GM12878 (cell line): ENCODE measurements at regions of chr10 and their contacts with region 1.

Region 1: DNA sequence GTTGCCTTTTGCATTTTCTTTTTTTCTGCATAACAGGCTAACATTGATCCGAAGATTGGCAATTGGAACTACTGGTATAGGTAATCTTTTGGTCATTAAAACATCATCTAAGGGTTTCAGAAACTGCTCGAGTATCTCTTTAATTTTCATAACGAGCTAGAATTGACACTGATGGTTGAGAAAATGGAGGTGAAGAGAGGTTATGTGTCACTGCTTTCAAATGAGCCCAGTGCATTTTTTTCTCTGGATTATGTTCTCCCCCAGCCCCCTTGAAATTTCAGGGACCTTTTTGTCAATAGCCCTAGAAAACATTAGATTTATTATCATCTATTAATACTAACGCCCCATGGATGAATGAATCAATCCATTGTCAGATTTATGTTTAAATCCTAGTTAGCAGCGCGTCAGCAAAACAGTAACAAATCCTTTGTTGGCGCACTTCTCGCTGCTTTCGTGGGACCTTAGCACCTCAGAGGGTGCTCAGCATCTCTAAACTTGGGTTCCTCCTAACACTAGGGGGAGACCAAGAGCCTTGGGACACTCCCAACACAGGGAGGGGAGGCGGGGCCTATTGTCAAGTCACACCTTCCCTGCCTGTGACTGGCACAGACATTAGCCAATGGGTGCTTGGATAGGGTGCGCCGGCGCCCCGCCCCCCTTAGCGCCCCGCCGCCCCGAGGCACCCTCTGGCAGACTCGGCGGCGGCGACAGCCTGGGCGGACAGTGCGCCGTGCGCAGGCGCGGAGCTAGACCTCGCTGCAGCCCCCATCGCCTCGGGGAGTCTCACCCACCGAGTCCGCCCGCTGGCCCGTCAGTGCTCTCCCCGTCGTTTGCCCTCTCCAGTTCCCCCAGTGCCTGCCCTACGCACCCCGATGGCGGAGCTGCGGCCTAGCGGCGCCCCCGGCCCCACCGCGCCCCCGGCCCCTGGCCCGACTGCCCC is at the start of gene SUFU:
- DNase-seq: peak; percentile 93
- ATAC-seq: peak; percentile 82
- H3K4me3 ChIP-seq: peak within 1 kb of the TSS; percentile 88
- H3K27ac ChIP-seq: peak within 1 kb of the TSS; percentile 72; the same call in 1 of the 2 replicates
- H3K4me1 ChIP-seq: peaks cover 7% of the 10 kb centered on the region
- H3K27me3 ChIP-seq: no peaks in the 10 kb centered on the region
- CTCF ChIP-seq: peak; percentile 82 to 98 (median 89); a peak in 5 of 6 replicates
- EP300 ChIP-seq: no peak
- POLR2A ChIP-seq: peak; percentile 92
- RAD21 ChIP-seq: peak; percentile 88
- polyA plus RNA-seq, gene SUFU: 0.68 to 0.84 TPM

Region 2: GRCh38 chr10:102159051-102159597 is 344.4 kb before region 1 on chr10:
- CTCF ChIA-PET with region 1: no interaction called
- POLR2A ChIA-PET with region 1: no interaction called
- RAD21 ChIA-PET with region 1: no interaction called
- SMC1A ChIA-PET with region 1: no interaction called
- in situ Hi-C with region 1: no loop called
- intact Hi-C with region 1: no loop called
- DNase-seq: no peak
- ATAC-seq: no peak
- H3K4me3 ChIP-seq: no peak overlapping the region
- H3K27ac ChIP-seq: no peak overlapping the region
- H3K4me1 ChIP-seq: no peaks in the 10 kb centered on the region; the same call in 1 of the 2 replicates
- H3K27me3 ChIP-seq: no peaks in the 10 kb centered on the region
- CTCF ChIP-seq: no peak
- EP300 ChIP-seq: no peak
- POLR2A ChIP-seq: no peak
- RAD21 ChIP-seq: no peak

Region 3: GRCh38 chr10:102410429-102411073 is 93.0 kb before region 1 on chr10:
- CTCF ChIA-PET with region 1: no interaction called
- POLR2A ChIA-PET with region 1: no interaction called
- RAD21 ChIA-PET with region 1: no interaction called
- SMC1A ChIA-PET with region 1: no interaction called
- in situ Hi-C with region 1: no loop called
- intact Hi-C with region 1: no loop called
- DNase-seq: no peak
- ATAC-seq: no peak
- H3K4me3 ChIP-seq: no peak overlapping the region; the same call in 1 of the 2 replicates
- H3K27ac ChIP-seq: no peak overlapping the region
- H3K4me1 ChIP-seq: peaks cover 9% of the 10 kb centered on the region
- H3K27me3 ChIP-seq: peaks cover 17 to 21% of the 10 kb centered on the region in 2 experiments
- CTCF ChIP-seq: no peak
- EP300 ChIP-seq: no peak
- POLR2A ChIP-seq: no peak; the same call in 1 of the 2 replicates
- RAD21 ChIP-seq: no peak

Region 4: DNA sequence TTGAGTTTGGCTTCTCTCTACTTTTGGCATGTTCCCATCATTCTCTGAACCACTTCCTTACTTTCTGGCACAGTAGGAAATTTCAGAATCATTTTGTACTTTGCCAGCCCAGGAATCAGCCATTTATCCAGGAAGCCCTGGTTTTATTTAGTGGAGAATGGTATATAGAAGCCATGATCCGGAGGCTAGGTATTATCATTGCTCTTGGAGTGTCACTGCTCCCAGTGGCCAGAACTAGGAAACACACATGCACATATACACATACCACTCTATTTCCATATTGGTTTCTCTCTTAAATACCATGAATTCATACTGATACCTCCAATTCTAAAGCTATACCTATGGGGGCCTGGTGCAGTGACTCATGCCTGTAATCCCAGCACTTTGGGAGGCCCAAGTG is 36.5 kb after region 1 on chr10:
- CTCF ChIA-PET with region 1: interaction called, 6 read pairs
- POLR2A ChIA-PET with region 1: interaction called, 5 read pairs
- RAD21 ChIA-PET with region 1: interaction called, 5 read pairs
- SMC1A ChIA-PET with region 1: interaction called, 9 read pairs
- in situ Hi-C with region 1: no loop called
- intact Hi-C with region 1: loop called (anchors 1 kb)
- DNase-seq: no peak
- ATAC-seq: peak; percentile 88
- H3K4me3 ChIP-seq: no peak overlapping the region; the same call in 1 of the 2 replicates
- H3K27ac ChIP-seq: no peak overlapping the region
- H3K4me1 ChIP-seq: peaks cover 20% of the 10 kb centered on the region
- H3K27me3 ChIP-seq: no peaks in the 10 kb centered on the region
- CTCF ChIP-seq: peak; percentile 40 to 55 (median 53)
- EP300 ChIP-seq: no peak
- POLR2A ChIP-seq: no peak
- RAD21 ChIP-seq: peak; percentile 34

Region 5: DNA sequence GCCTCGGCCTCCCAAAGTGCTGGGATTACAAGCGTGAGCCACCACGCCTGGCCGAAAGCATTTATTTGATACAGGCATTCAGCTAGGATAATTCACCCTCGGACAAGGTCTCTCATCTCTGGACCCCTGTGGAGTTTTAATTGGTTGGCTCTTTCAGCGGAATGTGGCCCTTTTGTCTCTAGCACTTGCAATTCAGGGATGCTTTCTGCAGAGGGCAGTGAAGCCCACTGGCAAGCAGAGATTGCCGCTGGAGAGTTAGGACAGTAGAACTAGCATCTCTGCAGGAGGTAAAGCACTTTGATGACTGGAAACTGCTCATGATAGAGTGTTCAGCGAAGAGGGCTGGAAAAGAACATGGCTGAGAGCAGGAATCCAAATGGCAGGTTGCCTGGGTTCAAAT is 62.2 kb after region 1 on chr10:
- CTCF ChIA-PET with region 1: interaction called, 11 read pairs
- POLR2A ChIA-PET with region 1: interaction called, 5 read pairs
- RAD21 ChIA-PET with region 1: interaction called, 12 read pairs
- SMC1A ChIA-PET with region 1: interaction called, 9 read pairs
- in situ Hi-C with region 1: no loop called
- intact Hi-C with region 1: no loop called
- DNase-seq: no peak
- ATAC-seq: no peak
- H3K4me3 ChIP-seq: no peak overlapping the region
- H3K27ac ChIP-seq: no peak overlapping the region
- H3K4me1 ChIP-seq: peaks cover 15% of the 10 kb centered on the region
- H3K27me3 ChIP-seq: no peaks in the 10 kb centered on the region
- CTCF ChIP-seq: no peak
- EP300 ChIP-seq: no peak
- POLR2A ChIP-seq: no peak
- RAD21 ChIP-seq: no peak

Region 6: GRCh38 chr10:102588875-102589274 is 85.3 kb after region 1 on chr10:
- CTCF ChIA-PET with region 1: interaction called, 325 read pairs
- POLR2A ChIA-PET with region 1: interaction called, 24 read pairs
- RAD21 ChIA-PET with region 1: interaction called, 206 read pairs
- SMC1A ChIA-PET with region 1: interaction called, 137 read pairs
- in situ Hi-C with region 1: loop called (anchors 5 kb)
- intact Hi-C with region 1: no loop called
- DNase-seq: no peak
- ATAC-seq: no peak
- H3K4me3 ChIP-seq: no peak overlapping the region
- H3K27ac ChIP-seq: no peak overlapping the region
- H3K4me1 ChIP-seq: no peaks in the 10 kb centered on the region
- H3K27me3 ChIP-seq: no peaks in the 10 kb centered on the region
- CTCF ChIP-seq: no peak
- EP300 ChIP-seq: no peak
- POLR2A ChIP-seq: no peak
- RAD21 ChIP-seq: no peak

Region 7: DNA sequence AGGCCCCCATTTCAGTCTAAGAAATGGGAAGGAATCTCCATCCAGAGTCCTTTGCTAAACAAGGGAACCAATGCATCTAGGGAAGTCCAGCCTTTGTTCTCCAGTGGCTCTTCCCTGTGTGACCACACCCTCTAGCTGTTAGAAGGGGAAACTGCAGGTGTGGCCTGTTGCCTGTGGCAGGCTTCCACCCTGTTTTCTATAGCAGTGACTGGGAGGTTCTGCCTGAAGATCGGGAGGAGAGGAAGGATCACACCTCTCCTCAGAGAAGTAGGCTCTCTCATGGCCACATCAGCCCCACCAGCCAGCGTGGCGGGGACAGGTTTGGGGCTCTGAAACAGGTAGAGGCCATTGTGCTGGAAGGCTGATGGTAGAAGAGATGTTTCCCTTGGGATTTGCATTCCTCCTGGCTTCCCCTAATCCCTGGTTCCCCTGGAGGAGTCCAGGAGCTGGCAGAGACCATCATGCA is 93.0 kb after region 1 on chr10:
- CTCF ChIA-PET with region 1: interaction called, 40 read pairs
- POLR2A ChIA-PET with region 1: no interaction called
- RAD21 ChIA-PET with region 1: interaction called, 5 read pairs
- SMC1A ChIA-PET with region 1: interaction called, 3 read pairs
- in situ Hi-C with region 1: no loop called
- intact Hi-C with region 1: loop called (anchors 5 kb)
- DNase-seq: no peak
- ATAC-seq: peak; percentile 91
- H3K4me3 ChIP-seq: no peak overlapping the region
- H3K27ac ChIP-seq: no peak overlapping the region
- H3K4me1 ChIP-seq: no peaks in the 10 kb centered on the region
- H3K27me3 ChIP-seq: no peaks in the 10 kb centered on the region
- CTCF ChIP-seq: peak; percentile 89 to 92 (median 89); a peak in 5 of 6 replicates
- EP300 ChIP-seq: no peak
- POLR2A ChIP-seq: no peak
- RAD21 ChIP-seq: peak; percentile 72